ENCODE measurements at regions of chr11 and their contacts with region 1.

Region 1: GRCh38 chr11:112588252-112588694 is 327.6 kb upstream of the PLET1 start:
- DNase-seq: peak in 9 of 10 donors; percentile 40 to 88 (median 78)
- H3K4me3 ChIP-seq: peak overlapping the region in 3 of 59 donors; percentile 17 to 31 (median 19)
- H3K27ac ChIP-seq: peak overlapping the region in 38 of 59 donors; percentile 3 to 73 (median 52)
- H3K27me3 ChIP-seq: no peaks in the 10 kb centered on the region
- CTCF ChIP-seq: peak; percentile 55 to 93 (median 83)

Region 2: DNA sequence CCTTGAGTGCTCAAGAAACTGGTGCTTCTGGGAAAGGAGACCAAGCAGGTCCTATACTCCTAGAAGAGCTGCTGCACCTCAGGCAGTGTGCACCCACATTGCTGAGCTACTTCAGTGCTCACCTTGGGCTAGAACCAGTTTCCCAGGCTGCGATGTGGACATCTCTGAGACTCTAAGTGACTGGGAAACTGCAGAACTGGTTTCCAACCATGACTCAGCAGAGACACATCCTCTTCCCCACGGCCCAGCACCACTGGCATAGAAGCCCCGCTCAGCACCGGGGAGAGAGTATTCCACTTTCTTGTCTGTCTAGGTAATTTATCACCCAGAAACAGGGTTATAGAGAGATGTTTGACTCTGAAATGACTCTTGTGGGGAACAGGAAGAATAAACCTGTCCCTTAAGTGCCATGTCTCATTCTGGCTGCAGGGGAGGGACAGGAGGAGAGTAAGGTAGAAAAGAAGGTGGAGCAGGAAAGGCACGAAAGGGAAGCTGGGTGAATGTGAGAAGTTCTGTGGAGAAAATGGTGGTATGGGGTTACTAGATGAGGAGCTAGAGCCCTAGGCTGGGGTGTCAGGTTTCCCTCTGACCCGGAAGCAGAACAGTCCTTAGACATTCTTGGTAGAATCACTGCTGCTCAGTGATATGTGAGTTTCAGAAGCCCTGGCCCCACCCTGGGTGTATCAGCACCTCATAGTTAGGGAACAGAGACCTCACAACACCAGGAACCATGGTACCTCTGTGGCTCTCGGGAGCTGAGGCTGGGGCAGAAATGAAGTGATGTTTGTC is 32.5 kb after region 1 on chr11:
- intact Hi-C with region 1: no loop called
- DNase-seq: no peak
- H3K4me3 ChIP-seq: no peak overlapping the region
- H3K27ac ChIP-seq: no peak overlapping the region
- H3K27me3 ChIP-seq: no peaks in the 10 kb centered on the region
- CTCF ChIP-seq: no peak

Region 3: GRCh38 chr11:112634551-112634950 is 46.3 kb after region 1 on chr11:
- intact Hi-C with region 1: loop called in 1 of 2 experiments (anchors 2 kb)
- DNase-seq: no peak
- H3K4me3 ChIP-seq: no peak overlapping the region
- H3K27ac ChIP-seq: peak overlapping the region in 37 of 59 donors; percentile 1 to 98 (median 52)
- H3K27me3 ChIP-seq: no peaks in the 10 kb centered on the region
- CTCF ChIP-seq: peak in 2 of 56 donors; percentile 5 to 15

Region 4: GRCh38 chr11:112723676-112724495 is 135.6 kb after region 1 on chr11:
- intact Hi-C with region 1: no loop called
- DNase-seq: no peak
- H3K4me3 ChIP-seq: no peak overlapping the region
- H3K27ac ChIP-seq: no peak overlapping the region
- H3K27me3 ChIP-seq: no peaks in the 10 kb centered on the region
- CTCF ChIP-seq: no peak

Region 5: GRCh38 chr11:112734207-112734606 is 145.9 kb after region 1 on chr11:
- intact Hi-C with region 1: loop called in 1 of 2 experiments (anchors 5 kb)
- DNase-seq: no peak
- H3K4me3 ChIP-seq: no peak overlapping the region
- H3K27ac ChIP-seq: peak overlapping the region in 9 of 59 donors; percentile 10 to 98 (median 91)
- H3K27me3 ChIP-seq: no peaks in the 10 kb centered on the region
- CTCF ChIP-seq: no peak

Region 6: DNA sequence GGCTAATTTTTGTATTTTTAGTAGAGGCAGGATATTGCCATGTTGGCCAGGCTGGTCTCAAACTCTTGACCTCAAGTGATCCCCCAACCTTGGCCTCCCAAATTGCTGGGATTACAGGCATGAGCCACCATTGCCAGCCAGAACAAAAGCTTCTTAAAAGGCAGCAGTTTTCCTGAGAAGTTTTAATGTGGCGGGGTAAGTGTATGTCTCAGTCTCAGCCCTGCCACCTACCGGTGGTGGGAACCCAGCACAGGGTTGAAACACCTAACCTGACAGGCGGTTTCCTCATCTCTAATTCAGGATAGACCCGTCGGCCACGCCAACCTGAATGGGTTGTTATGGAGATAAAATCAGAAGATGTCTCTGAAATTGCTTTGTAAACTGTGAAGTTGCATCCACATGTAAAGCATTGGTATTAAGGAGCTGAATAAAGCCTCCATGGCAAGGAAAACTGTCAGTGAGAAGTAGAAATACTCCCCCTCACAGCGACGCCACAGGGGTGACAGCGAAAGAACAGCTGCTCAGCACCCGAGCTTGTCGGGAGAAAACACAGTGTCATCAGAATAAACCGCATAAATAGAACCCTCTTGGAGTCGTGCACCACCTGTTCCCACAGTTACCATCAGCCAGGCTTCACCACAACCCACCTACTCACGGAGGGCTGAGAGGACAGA is 207.0 kb after region 1 on chr11:
- intact Hi-C with region 1: loop called in 1 of 2 experiments (anchors 10 kb)
- DNase-seq: peak in 5 of 10 donors; percentile 59 to 70 (median 67)
- H3K4me3 ChIP-seq: peak overlapping the region in 1 of 59 donors; percentile 6
- H3K27ac ChIP-seq: peak overlapping the region in 26 of 59 donors; percentile 3 to 83 (median 72)
- H3K27me3 ChIP-seq: no peaks in the 10 kb centered on the region
- CTCF ChIP-seq: peak; percentile 21 to 78 (median 54)

Region 7: DNA sequence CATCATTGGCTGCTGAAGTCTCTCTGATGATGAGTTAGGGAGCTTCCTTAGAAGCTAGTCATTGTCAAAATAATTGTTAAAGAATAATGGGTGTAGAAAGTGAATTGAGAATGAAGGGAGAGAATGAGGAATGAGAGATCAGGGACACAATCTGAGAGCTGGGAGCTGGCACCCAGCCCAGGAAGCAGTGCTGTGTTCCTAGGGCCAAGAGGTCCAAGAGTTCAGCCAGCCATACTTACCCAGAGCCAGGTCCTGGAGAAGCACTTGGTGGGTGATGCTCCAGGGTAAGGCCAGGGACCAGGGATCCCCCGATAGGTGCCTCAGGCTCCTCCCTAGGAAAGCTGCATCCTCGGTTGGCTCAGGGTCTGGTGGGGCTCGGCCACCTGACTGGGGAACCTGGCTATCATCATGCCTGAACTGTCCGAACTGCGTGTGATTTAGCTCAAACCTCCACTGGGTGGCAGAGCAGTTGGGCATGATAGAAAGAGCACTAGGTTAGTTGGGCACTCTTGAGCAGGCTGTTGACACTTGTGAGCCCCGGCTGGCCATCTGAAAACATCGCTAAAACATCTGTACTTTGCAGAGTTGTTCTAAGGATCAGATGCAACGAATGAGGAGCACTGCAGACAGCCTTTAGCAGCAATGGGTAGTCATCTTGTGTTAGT is 249.0 kb after region 1 on chr11:
- intact Hi-C with region 1: loop called in 1 of 2 experiments (anchors 5 kb)
- DNase-seq: peak in 8 of 10 donors; percentile 42 to 80 (median 66)
- H3K4me3 ChIP-seq: no peak overlapping the region
- H3K27ac ChIP-seq: peak overlapping the region in 15 of 59 donors; percentile 0 to 55 (median 33)
- H3K27me3 ChIP-seq: no peaks in the 10 kb centered on the region
- CTCF ChIP-seq: peak in 54 of 56 donors; percentile 25 to 80 (median 58)

Region 8: GRCh38 chr11:113113801-113114706 is 525.8 kb after region 1 on chr11:
- intact Hi-C with region 1: loop called (anchors 5 to 10 kb)
- DNase-seq: peak; percentile 60 to 84 (median 77)
- H3K4me3 ChIP-seq: peak overlapping the region in 4 of 59 donors; percentile 5 to 22 (median 14)
- H3K27ac ChIP-seq: peak overlapping the region in 51 of 59 donors; percentile 14 to 75 (median 57)
- H3K27me3 ChIP-seq: no peaks in the 10 kb centered on the region
- CTCF ChIP-seq: peak; percentile 61 to 94 (median 83)

Region 9: DNA sequence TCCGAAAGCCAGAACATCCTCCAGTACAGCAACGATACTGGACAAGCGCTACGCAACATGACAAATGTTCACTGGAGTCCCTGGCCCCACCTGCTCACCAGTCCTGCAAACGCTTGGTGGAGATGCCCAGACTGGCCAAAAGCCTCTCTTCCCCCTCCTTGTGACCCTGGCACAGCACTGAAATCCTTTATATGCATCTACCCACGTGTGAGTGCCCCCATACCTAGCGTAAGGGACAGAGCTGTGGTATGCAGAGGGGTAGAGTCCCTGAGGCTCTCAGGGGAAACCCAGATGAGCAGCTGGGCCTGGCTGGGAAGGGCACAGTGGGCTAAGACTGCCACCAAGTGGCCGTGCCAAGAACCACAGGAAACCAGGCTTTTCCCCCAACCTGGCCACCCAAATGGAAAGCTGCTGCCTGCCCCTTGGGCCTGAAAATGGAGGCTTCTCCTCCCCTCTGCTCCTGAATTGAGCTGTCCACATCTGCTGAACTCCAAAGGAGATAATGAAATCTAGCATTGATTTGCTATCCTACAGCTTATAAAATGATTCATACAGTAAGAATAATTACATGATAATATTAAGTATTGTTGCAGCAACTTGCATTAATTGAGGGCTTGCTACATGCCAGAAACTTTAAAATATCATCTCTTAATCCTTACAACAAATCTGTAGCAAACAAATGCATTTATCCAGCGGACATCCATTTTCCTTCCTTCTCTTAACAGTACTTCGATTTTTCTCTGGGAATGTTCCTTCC is 701.3 kb after region 1 on chr11:
- intact Hi-C with region 1: loop called (anchors 5 kb)
- DNase-seq: peak; percentile 64 to 83 (median 66)
- H3K4me3 ChIP-seq: no peak overlapping the region
- H3K27ac ChIP-seq: no peak overlapping the region
- H3K27me3 ChIP-seq: peaks cover 0 to 4% (median 0%) of the 10 kb centered on the region in 45 donors
- CTCF ChIP-seq: peak; percentile 73 to 98 (median 89)

Measured in dorsolateral prefrontal cortex (tissue), 120 donors.